B cell (primary cell): ENCODE measurements at regions of chr18 and their contacts with region 1.

Region 1: GRCh38 chr18:3151399-3152264 is 68.1 kb downstream of the MYOM1 start:
- DNase-seq: peak; percentile 50
- ATAC-seq: peak; percentile 33
- H3K4me3 ChIP-seq: no peak overlapping the region
- H3K4me3 Mint-ChIP-seq: no peak overlapping the region
- H3K27ac ChIP-seq: no peak overlapping the region
- H3K27ac Mint-ChIP-seq: no peak overlapping the region
- H3K4me1 ChIP-seq: no peaks in the 10 kb centered on the region
- H3K4me1 Mint-ChIP-seq: peaks cover 7% of the 10 kb centered on the region
- H3K27me3 ChIP-seq: no peaks in the 10 kb centered on the region
- H3K27me3 Mint-ChIP-seq: no peaks in the 10 kb centered on the region
- CTCF ChIP-seq: peak; percentile 95

Region 2: DNA sequence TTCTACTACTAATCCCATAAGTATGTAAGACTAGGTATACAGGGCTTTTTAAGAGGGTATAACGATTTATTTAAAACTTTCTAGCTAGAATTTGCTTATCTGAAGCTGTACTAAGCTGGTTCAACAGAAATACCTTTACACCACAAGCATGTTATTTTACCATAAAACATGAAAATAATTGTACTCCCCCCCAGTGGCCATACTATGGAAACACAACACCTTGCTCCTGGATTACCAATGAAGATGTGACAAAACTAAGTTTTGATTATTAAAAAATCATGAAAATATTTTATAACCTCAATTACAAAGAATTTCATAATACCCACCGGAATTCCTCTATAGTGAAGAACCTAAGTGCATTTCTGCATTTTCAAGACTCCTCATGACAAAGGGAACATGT is 166.0 kb before region 1 on chr18:
- CTCF ChIA-PET with region 1: interaction called, 17 read pairs
- POLR2A ChIA-PET with region 1: no interaction called
- intact Hi-C with region 1: loop called (anchors 5 kb)
- DNase-seq: peak; percentile 72
- ATAC-seq: peak; percentile 69
- H3K4me3 ChIP-seq: no peak overlapping the region
- H3K4me3 Mint-ChIP-seq: no peak overlapping the region
- H3K27ac ChIP-seq: no peak overlapping the region
- H3K27ac Mint-ChIP-seq: no peak overlapping the region
- H3K4me1 ChIP-seq: peaks cover 32 to 51% of the 10 kb centered on the region in 2 donors
- H3K4me1 Mint-ChIP-seq: peaks cover 51% of the 10 kb centered on the region
- H3K27me3 ChIP-seq: no peaks in the 10 kb centered on the region
- H3K27me3 Mint-ChIP-seq: no peaks in the 10 kb centered on the region
- CTCF ChIP-seq: peak; percentile 81

Region 3: GRCh38 chr18:3129053-3129864 is 22.4 kb before region 1 on chr18:
- CTCF ChIA-PET with region 1: interaction called, 11 read pairs
- POLR2A ChIA-PET with region 1: no interaction called
- intact Hi-C with region 1: no loop called
- DNase-seq: peak; percentile 80
- ATAC-seq: peak; percentile 98
- H3K4me3 ChIP-seq: no peak overlapping the region
- H3K4me3 Mint-ChIP-seq: peak overlapping the region; percentile 4
- H3K27ac ChIP-seq: no peak overlapping the region
- H3K27ac Mint-ChIP-seq: no peak overlapping the region
- H3K4me1 ChIP-seq: peaks cover 0 to 4% of the 10 kb centered on the region in 2 donors
- H3K4me1 Mint-ChIP-seq: peaks cover 6% of the 10 kb centered on the region
- H3K27me3 ChIP-seq: no peaks in the 10 kb centered on the region
- H3K27me3 Mint-ChIP-seq: no peaks in the 10 kb centered on the region
- CTCF ChIP-seq: peak; percentile 89

Region 4: GRCh38 chr18:3177902-3178687 is 26.5 kb after region 1 on chr18:
- CTCF ChIA-PET with region 1: interaction called, 22 read pairs
- POLR2A ChIA-PET with region 1: interaction called, 3 read pairs
- intact Hi-C with region 1: loop called (anchors 1 kb)
- DNase-seq: peak; percentile 95
- ATAC-seq: peak; percentile 84
- H3K4me3 ChIP-seq: peak overlapping the region in 3 of 5 experiments; percentile 37 to 59 (median 44)
- H3K4me3 Mint-ChIP-seq: peak overlapping the region; percentile 77
- H3K27ac ChIP-seq: peak overlapping the region; percentile 53 to 78
- H3K27ac Mint-ChIP-seq: peak overlapping the region; percentile 97
- H3K4me1 ChIP-seq: peaks cover 20 to 27% of the 10 kb centered on the region in 2 donors
- H3K4me1 Mint-ChIP-seq: peaks cover 28% of the 10 kb centered on the region
- H3K27me3 ChIP-seq: no peaks in the 10 kb centered on the region
- H3K27me3 Mint-ChIP-seq: no peaks in the 10 kb centered on the region
- CTCF ChIP-seq: no peak

Region 5: DNA sequence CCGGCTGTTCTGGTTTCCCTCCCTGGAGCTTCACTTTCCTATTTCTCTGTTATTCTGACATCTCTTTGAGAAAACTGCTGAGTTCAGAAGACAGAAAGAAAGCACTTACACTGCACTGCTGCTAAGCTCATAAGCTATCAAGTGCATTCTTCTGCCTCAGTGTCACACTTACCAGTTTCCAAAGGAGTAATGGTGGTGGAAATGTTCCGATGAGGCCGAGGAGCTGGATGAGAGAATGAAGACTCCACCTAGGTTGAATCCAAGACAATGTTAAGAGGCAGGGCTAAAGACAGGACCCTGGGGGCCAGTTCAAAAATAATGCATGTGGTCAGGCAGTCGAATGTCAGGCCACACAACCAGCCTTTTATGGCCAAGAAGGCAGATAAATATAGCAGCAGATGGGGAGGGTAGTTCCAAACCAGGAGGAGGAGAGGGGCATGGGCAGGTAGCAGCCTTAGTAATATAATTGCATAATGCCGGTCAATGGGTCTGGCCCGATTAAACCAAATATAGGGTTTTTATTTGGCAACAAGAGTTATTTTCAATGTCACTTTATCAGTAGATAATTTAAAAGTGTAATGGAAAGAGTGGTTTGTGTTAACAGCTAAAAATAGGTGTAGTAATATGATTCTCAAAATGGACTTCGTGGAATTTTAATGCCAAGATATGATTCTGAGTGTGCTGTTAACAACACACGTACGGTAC is 68.2 kb after region 1 on chr18 and contains the start of gene MYOM1:
- CTCF ChIA-PET with region 1: interaction called, 10 read pairs
- POLR2A ChIA-PET with region 1: no interaction called
- intact Hi-C with region 1: no loop called
- DNase-seq: no peak
- ATAC-seq: no peak
- H3K4me3 ChIP-seq: no peak within 1 kb of the TSS
- H3K4me3 Mint-ChIP-seq: no peak within 1 kb of the TSS
- H3K27ac ChIP-seq: no peak within 1 kb of the TSS
- H3K27ac Mint-ChIP-seq: no peak within 1 kb of the TSS
- H3K4me1 ChIP-seq: no peaks in the 10 kb centered on the region
- H3K4me1 Mint-ChIP-seq: no peaks in the 10 kb centered on the region
- H3K27me3 ChIP-seq: no peaks in the 10 kb centered on the region
- H3K27me3 Mint-ChIP-seq: no peaks in the 10 kb centered on the region
- CTCF ChIP-seq: no peak
- total RNA-seq, gene MYOM1: 12.8 and 16.1 TPM in 2 replicates

Region 6: DNA sequence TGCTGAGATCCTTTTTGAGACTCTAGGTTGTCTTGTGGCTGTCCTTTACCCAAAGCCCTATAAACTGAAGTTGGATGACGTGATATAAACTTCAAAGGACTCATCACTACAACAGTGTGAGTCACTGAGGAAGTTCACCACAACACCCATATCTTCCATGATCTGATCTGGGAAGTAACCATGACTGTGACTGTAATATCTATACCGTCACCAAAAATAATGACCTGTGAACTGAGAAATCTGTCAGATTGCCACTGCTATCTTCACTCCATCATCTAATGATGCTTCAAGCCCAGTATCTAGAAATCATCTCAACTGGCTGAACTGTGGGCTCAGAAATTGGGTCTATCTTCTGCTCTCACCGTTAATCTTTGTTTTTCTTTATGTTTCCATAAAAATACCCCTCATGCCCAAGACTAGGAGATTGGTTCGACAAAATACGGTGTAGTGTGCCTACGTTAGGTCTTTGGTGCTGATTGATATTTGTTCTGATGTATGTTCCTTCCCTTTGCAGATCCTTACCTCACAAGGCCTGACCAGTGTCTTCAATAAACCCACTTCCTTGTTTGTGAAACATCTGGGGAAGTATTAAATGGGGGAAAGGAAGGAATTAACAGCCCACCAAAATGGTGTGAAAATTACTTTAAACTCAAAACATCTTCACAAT is 188.5 kb after region 1 on chr18:
- CTCF ChIA-PET with region 1: no interaction called
- POLR2A ChIA-PET with region 1: no interaction called
- intact Hi-C with region 1: no loop called
- DNase-seq: no peak
- ATAC-seq: no peak
- H3K4me3 ChIP-seq: no peak overlapping the region
- H3K4me3 Mint-ChIP-seq: no peak overlapping the region
- H3K27ac ChIP-seq: no peak overlapping the region
- H3K27ac Mint-ChIP-seq: no peak overlapping the region
- H3K4me1 ChIP-seq: no peaks in the 10 kb centered on the region
- H3K4me1 Mint-ChIP-seq: no peaks in the 10 kb centered on the region
- H3K27me3 ChIP-seq: no peaks in the 10 kb centered on the region
- H3K27me3 Mint-ChIP-seq: no peaks in the 10 kb centered on the region
- CTCF ChIP-seq: no peak